CD8-positive, alpha-beta memory T cell (primary cell): ENCODE measurements at regions of chr17 and their contacts with region 1.

Region 1: GRCh38 chr17:80101011-80101945 is at the start of gene GAA:
- DNase-seq: peak; percentile 89 to 92 (median 92)
- H3K4me3 ChIP-seq: peak within 1 kb of the TSS; percentile 86
- H3K4me3 Mint-ChIP-seq: peak within 1 kb of the TSS; percentile 88 to 94 (median 91)
- H3K27ac ChIP-seq: peak within 1 kb of the TSS; percentile 67
- H3K27ac Mint-ChIP-seq: peak within 1 kb of the TSS; percentile 77 to 93 (median 89)
- H3K4me1 ChIP-seq: peaks cover 21% of the 10 kb centered on the region
- H3K4me1 Mint-ChIP-seq: peaks cover 19 to 35% (median 29%) of the 10 kb centered on the region in 3 donors
- H3K27me3 ChIP-seq: no peaks in the 10 kb centered on the region
- H3K27me3 Mint-ChIP-seq: no peaks in the 10 kb centered on the region
- total RNA-seq, gene GAA: 30.5 to 31.0 TPM

Region 2: DNA sequence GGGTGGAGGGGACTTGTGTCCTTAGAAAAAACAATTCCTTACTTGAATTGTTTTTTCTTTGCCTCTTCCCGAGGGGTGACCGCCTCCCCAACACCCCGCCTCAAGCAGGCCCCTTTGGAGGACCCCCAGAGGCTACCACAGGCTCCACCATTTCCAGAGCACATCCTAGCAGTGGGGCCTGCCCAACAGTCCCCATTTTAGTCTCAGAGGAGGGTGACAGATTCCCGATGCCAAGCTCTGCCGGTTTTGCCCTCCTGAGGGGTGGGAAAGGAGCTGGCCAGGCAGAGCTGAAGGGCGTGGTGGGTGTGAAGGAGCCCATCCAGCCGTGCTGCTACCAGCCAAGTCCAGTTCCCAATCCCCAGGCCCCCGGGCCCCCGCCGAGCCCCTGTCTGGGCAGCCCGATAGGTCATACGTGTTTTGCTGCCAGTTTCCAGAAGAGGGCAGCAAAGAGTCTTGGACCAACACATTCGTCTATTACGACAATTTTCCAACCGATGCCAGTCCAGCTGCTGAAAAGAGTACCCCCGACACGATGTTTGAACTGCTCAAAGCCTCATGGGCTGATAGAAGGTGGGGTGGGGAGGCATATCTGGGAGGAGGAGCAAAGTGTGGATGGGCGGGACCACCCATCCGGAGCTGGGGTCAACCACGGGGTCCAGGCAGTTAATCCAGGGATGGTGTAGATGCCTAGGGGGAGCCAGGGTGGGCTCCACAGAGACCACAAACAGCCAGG is 18.7 kb before region 1 on chr17:
- CTCF ChIA-PET with region 1: interaction called, 23 read pairs
- POLR2A ChIA-PET with region 1: interaction called, 3 read pairs
- DNase-seq: peak; percentile 17 to 66 (median 40)
- H3K4me3 ChIP-seq: no peak overlapping the region
- H3K4me3 Mint-ChIP-seq: no peak overlapping the region
- H3K27ac ChIP-seq: no peak overlapping the region
- H3K27ac Mint-ChIP-seq: peak overlapping the region in 2 of 8 donors; percentile 64 to 66
- H3K4me1 ChIP-seq: peaks cover 5% of the 10 kb centered on the region
- H3K4me1 Mint-ChIP-seq: peaks cover 0 to 3% (median 2%) of the 10 kb centered on the region in 3 donors
- H3K27me3 ChIP-seq: no peaks in the 10 kb centered on the region
- H3K27me3 Mint-ChIP-seq: peaks cover 10 to 11% of the 10 kb centered on the region in 2 donors

Region 3: GRCh38 chr17:80146121-80147034 is 45.1 kb after region 1 on chr17:
- CTCF ChIA-PET with region 1: interaction called, 12 read pairs
- POLR2A ChIA-PET with region 1: interaction called, 9 read pairs
- DNase-seq: peak in 3 of 5 donors; percentile 11 to 48 (median 31)
- H3K4me3 ChIP-seq: peak overlapping the region; percentile 57
- H3K4me3 Mint-ChIP-seq: peak overlapping the region; percentile 97 to 99 (median 99)
- H3K27ac ChIP-seq: peak overlapping the region; percentile 79
- H3K27ac Mint-ChIP-seq: peak overlapping the region; percentile 87 to 99 (median 98)
- H3K4me1 ChIP-seq: peaks cover 28% of the 10 kb centered on the region
- H3K4me1 Mint-ChIP-seq: peaks cover 35 to 48% (median 37%) of the 10 kb centered on the region in 3 donors
- H3K27me3 ChIP-seq: no peaks in the 10 kb centered on the region
- H3K27me3 Mint-ChIP-seq: peaks cover 0 to 2% of the 10 kb centered on the region in 2 donors